OCI-LY7 (cell line): ENCODE measurements at regions of chr7 and their contacts with region 1.

Region 1: DNA sequence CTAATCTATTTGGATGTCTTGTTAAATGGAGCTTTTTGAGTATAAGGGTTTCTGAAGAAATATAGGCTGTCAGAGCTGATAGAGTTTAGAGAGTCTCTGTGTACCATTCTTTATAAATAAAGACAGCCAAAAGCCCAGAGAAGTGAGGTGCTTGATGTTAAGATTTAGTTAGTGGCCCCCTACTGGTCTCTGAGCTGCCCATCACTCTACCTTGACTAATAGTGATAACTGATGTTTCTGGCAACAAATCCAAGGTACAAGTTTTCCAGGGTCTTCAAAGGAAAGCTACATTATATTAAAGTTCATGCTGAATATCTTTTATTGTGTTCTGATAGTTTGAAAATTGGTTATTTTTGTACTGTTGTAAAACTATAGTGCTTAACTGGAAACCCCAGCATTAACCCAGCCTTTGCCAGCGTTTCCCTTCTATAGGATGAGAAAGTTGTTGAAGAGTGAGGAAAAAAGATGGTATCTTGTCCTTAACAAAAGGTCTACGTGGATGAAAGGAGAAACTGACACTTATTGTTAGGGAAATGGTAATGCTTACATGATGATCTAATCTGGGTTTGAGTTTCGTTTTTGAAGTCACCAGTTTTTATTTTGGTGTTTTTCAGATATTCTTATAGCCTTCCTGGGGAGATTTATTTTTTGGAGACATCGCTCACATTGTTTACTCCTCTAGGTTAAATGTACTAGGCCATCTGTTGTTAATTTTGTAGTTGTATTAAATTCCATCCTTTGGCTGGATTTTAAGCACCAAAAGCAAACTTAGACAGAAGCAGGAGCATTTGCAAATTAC is 79.0 kb downstream of the AUTS2 start:
- DNase-seq: peak; percentile 61
- H3K4me3 ChIP-seq: no peak overlapping the region
- H3K27ac ChIP-seq: no peak overlapping the region
- H3K4me1 ChIP-seq: peaks cover 50% of the 10 kb centered on the region
- CTCF ChIP-seq: peak; percentile 86

Region 2: GRCh38 chr7:69403169-69403568 is 274.1 kb before region 1 on chr7:
- CTCF ChIA-PET with region 1: no interaction called
- POLR2A ChIA-PET with region 1: no interaction called
- intact Hi-C with region 1: loop called (anchors 5 kb)
- DNase-seq: peak; percentile 73
- H3K4me3 ChIP-seq: no peak overlapping the region
- H3K27ac ChIP-seq: no peak overlapping the region
- H3K4me1 ChIP-seq: no peaks in the 10 kb centered on the region
- CTCF ChIP-seq: peak; percentile 82

Region 3: GRCh38 chr7:69434398-69434815 is 242.8 kb before region 1 on chr7:
- CTCF ChIA-PET with region 1: no interaction called
- POLR2A ChIA-PET with region 1: no interaction called
- intact Hi-C with region 1: no loop called
- DNase-seq: peak; percentile 40
- H3K4me3 ChIP-seq: no peak overlapping the region
- H3K27ac ChIP-seq: no peak overlapping the region
- H3K4me1 ChIP-seq: peaks cover 31% of the 10 kb centered on the region
- CTCF ChIP-seq: no peak

Region 4: DNA sequence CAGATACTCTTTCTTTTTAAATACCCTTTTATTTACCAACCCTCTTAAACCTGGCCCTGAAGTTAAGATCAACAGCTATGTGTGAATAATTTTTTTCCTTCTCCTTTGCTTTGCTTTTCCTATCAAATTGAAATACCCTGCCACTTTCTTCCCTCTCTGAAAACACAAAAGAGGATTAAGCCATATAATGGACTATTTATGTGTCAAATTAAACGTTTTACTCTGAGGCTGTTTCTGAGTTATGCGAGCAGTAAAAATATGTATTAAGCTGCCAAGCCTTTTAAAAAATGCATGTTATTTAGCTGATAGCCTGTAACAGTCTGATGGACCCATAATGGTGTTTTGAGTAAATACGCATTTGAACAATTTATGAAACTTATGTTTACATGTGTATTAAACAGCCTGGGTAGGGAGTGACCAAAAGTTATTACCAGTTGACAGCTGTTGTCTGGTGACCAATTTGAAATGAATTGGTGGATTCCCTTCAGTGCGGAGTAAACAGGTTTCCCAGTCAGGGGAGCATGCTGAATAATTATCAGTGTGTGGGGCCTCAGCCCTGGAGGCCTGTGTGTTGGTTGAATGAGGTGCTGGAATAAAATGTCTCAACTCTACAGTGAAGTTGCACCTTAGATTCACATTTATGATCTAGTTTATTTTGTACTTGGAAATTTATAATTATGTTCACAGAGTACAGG is 10.6 kb after region 1 on chr7:
- CTCF ChIA-PET with region 1: interaction called, 3 read pairs
- POLR2A ChIA-PET with region 1: interaction called, 35 read pairs
- intact Hi-C with region 1: no loop called
- DNase-seq: no peak
- H3K4me3 ChIP-seq: no peak overlapping the region
- H3K27ac ChIP-seq: no peak overlapping the region
- H3K4me1 ChIP-seq: peaks cover 84% of the 10 kb centered on the region
- CTCF ChIP-seq: no peak